OCI-LY7 (cell line): ENCODE measurements at regions of chr4 and their contacts with region 1.

Region 1: DNA sequence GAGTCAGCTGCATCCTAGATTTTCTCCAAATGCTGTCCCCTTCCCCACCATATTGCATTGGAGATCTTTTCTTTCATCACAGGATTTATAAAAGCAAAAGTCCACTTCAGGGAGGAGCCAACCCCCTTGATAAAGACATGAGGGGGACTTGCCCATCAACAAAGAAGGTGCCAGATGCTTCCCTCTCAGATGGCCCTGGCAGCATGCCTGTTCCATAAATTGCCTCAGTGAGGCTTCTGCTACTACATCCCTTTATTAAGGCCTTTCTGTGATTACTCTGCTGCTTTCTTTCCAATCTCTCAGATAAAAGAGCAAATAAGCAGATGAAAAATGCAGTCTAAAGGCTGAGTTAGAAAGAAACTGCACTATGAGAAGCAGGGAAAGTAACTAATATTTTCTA is 511.6 kb downstream of the PACRGL start:
- DNase-seq: no peak
- H3K4me3 ChIP-seq: no peak overlapping the region
- H3K27ac ChIP-seq: no peak overlapping the region
- H3K4me1 ChIP-seq: no peaks in the 10 kb centered on the region
- CTCF ChIP-seq: no peak

Region 2: GRCh38 chr4:19298998-19299397 is 1912.8 kb before region 1 on chr4:
- CTCF ChIA-PET with region 1: no interaction called
- POLR2A ChIA-PET with region 1: no interaction called
- intact Hi-C with region 1: loop called (anchors 5 kb)
- DNase-seq: no peak
- H3K4me3 ChIP-seq: no peak overlapping the region
- H3K27ac ChIP-seq: no peak overlapping the region
- H3K4me1 ChIP-seq: no peaks in the 10 kb centered on the region
- CTCF ChIP-seq: no peak

Region 3: DNA sequence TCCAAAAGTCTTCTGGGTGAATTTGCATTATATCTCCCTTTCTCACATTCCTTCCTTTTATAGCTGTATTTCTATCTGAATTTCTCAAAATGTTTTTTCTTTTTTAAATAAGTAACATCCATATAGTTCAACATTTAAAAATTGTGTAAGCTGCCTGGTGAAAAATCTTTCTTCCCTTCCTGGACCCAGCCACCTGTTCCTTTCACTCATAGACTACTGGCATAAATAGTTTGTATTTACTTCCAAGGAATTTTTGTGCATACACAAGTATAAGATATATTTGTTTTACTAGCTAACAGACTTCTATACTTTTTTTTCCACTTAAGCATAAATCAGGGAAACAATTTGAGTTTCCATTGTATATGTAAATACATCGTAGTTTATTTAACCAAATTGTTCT is 475.9 kb before region 1 on chr4:
- CTCF ChIA-PET with region 1: no interaction called
- POLR2A ChIA-PET with region 1: no interaction called
- intact Hi-C with region 1: no loop called
- DNase-seq: no peak
- H3K4me3 ChIP-seq: no peak overlapping the region
- H3K27ac ChIP-seq: no peak overlapping the region
- H3K4me1 ChIP-seq: no peaks in the 10 kb centered on the region
- CTCF ChIP-seq: no peak